ENCODE measurements at regions of chr4 and their contacts with region 1.

Region 1: DNA sequence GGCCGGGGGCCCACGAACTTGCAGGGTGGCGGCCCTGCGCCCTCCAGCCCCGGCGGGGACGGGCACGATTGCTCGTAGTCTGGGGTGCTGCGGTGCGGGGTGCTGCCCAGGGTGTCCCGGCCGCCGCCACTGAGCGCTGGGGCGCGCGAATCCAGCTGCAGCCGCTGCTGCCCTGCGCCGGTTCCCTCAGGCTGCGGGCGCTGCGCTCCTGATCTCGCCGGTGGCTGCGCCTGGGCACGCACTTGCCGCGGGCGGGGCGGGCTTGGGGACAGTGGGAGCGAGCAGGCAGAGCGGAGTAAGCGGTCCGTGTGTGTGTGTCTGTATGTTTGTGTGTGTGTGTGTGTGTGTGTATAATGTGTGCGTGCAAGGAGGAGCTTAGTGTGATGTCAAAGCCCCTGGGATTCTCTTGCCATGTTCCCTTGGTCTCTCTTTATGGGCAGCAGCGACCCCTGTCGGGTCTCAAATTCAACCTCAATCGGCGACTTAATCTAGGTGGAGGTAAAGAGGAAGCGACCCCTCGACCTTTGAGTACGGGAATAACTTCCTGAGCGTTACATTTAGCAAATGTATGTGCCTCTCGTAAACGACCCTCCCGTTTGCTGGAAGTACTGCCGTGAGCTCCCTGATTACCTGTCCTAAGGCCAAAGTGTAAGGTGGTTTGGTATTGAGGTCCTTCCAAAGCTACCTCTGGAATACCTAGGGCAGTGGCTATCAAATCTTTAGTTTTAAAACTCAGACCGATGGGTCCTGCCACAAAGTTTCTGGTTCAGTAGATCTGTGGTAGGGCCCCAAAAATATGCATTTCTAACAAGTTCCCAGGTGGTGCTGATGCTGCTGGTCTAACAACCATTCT is at the start of gene RNF150:
- DNase-seq: peak; percentile 91 to 98 (median 93)
- H3K4me3 ChIP-seq: peak within 1 kb of the TSS; percentile 79 to 89 (median 84)
- H3K27ac ChIP-seq: peak within 1 kb of the TSS; percentile 54 to 66
- H3K4me1 ChIP-seq: peaks cover 0 to 8% (median 3%) of the 10 kb centered on the region in 3 donors
- H3K27me3 ChIP-seq: no peaks in the 10 kb centered on the region
- CTCF ChIP-seq: peak; percentile 65
- total RNA-seq, gene RNF150: 34.2 TPM

Region 2: GRCh38 chr4:140861359-140862176 is 271.8 kb before region 1 on chr4:
- intact Hi-C with region 1: loop called (anchors 5 kb)
- DNase-seq: peak in 4 of 5 donors; percentile 67 to 94 (median 88)
- H3K4me3 ChIP-seq: no peak overlapping the region
- H3K27ac ChIP-seq: no peak overlapping the region
- H3K4me1 ChIP-seq: no peaks in the 10 kb centered on the region
- H3K27me3 ChIP-seq: no peaks in the 10 kb centered on the region
- CTCF ChIP-seq: peak; percentile 90